ENCODE measurements at regions of chr1 and their contacts with region 1.

Region 1: GRCh38 chr1:43650310-43651085 is 549 bp downstream of the KDM4A start:
- DNase-seq: peak; percentile 98
- H3K4me3 Mint-ChIP-seq: peak overlapping the region; percentile 97
- H3K27ac Mint-ChIP-seq: peak overlapping the region; percentile 85
- H3K4me1 Mint-ChIP-seq: peaks cover 18% of the 10 kb centered on the region
- H3K27me3 Mint-ChIP-seq: no peaks in the 10 kb centered on the region
- CTCF ChIP-seq: no peak

Region 2: GRCh38 chr1:43227143-43227764 is 423.2 kb before region 1 on chr1:
- CTCF ChIA-PET with region 1: interaction called, 3 read pairs
- POLR2A ChIA-PET with region 1: interaction called, 7 read pairs
- intact Hi-C with region 1: loop called (anchors 5 kb)
- DNase-seq: peak; percentile 80
- H3K4me3 Mint-ChIP-seq: no peak overlapping the region
- H3K27ac Mint-ChIP-seq: no peak overlapping the region
- H3K4me1 Mint-ChIP-seq: peaks cover 11% of the 10 kb centered on the region
- H3K27me3 Mint-ChIP-seq: no peaks in the 10 kb centered on the region
- CTCF ChIP-seq: peak; percentile 71

Region 3: DNA sequence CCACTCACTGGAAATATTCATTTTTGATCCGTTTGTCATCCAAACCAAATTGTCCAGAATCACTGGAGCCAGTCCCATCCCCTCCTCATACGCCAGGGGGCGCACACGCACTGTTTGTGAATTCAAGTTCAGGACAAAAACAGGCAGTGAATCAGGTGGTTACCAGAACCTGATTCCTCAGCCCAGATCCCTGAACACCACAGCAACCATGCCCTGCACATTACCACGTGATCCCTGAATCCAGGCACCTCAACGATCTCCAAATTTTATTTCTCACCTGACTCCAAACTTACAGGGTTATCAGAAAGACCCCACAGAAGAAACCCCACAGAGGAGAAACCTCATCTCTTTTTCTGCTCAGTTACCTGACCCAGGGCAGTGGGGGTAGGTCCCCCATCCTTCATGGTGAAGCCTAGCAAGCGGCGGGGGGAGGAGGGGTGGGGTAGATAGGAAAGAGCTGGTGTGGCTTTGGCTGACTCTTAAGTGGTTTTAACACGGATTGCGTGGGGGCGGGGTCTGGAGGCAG is 121.2 kb before region 1 on chr1:
- CTCF ChIA-PET with region 1: interaction called, 7 read pairs
- POLR2A ChIA-PET with region 1: interaction called, 50 read pairs
- intact Hi-C with region 1: loop called (anchors 1 kb)
- DNase-seq: peak; percentile 93
- H3K4me3 Mint-ChIP-seq: no peak overlapping the region
- H3K27ac Mint-ChIP-seq: no peak overlapping the region
- H3K4me1 Mint-ChIP-seq: peaks cover 48% of the 10 kb centered on the region
- H3K27me3 Mint-ChIP-seq: no peaks in the 10 kb centered on the region
- CTCF ChIP-seq: peak; percentile 84

Region 4: GRCh38 chr1:43549921-43550597 is 100.4 kb before region 1 on chr1:
- CTCF ChIA-PET with region 1: interaction called, 4 read pairs
- POLR2A ChIA-PET with region 1: interaction called, 30 read pairs
- intact Hi-C with region 1: no loop called
- DNase-seq: peak; percentile 84
- H3K4me3 Mint-ChIP-seq: peak overlapping the region; percentile 63
- H3K27ac Mint-ChIP-seq: no peak overlapping the region
- H3K4me1 Mint-ChIP-seq: peaks cover 14% of the 10 kb centered on the region
- H3K27me3 Mint-ChIP-seq: no peaks in the 10 kb centered on the region
- CTCF ChIP-seq: no peak

Region 5: GRCh38 chr1:43587594-43587993 is 62.9 kb before region 1 on chr1:
- CTCF ChIA-PET with region 1: interaction called, 4 read pairs
- POLR2A ChIA-PET with region 1: interaction called, 27 read pairs
- intact Hi-C with region 1: loop called (anchors 5 kb)
- DNase-seq: peak; percentile 59
- H3K4me3 Mint-ChIP-seq: no peak overlapping the region
- H3K27ac Mint-ChIP-seq: peak overlapping the region; percentile 59
- H3K4me1 Mint-ChIP-seq: peaks cover 19% of the 10 kb centered on the region
- H3K27me3 Mint-ChIP-seq: no peaks in the 10 kb centered on the region
- CTCF ChIP-seq: no peak

Region 6: DNA sequence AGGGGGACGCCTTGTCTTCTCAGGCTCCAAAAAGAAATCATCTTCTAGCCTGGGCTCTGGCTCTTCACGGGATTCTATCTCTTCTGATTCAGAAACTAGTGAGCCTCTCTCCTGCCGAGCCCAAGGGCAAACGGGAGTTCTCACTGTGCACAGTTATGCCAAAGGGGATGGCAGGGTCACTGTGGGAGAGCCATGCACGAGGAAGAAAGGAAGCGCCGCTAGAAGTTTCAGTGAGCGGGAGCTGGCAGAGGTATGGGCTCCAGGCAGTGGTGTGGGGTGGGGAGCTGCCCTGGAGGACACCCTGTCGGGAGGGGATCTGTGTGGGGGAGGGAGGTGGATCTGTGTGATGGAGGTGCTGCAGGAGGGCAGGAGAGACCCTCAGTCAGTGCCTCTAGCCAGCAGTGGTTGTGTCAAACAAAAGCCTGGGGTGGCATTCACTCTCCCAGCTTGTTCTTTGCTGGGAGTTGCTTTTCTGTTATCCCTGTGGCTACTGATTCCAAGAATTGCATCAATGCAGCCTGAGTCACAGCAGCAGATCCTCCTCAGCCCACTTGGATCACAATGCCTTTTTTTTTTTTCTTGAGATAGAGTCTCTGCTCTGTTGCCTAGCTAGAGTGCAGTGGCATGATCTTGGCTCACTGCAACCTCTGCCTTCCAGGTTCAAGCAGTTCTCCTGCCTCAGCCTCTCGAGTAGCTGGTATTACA is 21.3 kb after region 1 on chr1:
- CTCF ChIA-PET with region 1: interaction called, 8 read pairs
- POLR2A ChIA-PET with region 1: interaction called, 41 read pairs
- intact Hi-C with region 1: no loop called
- DNase-seq: peak; percentile 48
- H3K4me3 Mint-ChIP-seq: no peak overlapping the region
- H3K27ac Mint-ChIP-seq: peak overlapping the region; percentile 78
- H3K4me1 Mint-ChIP-seq: peaks cover 13% of the 10 kb centered on the region
- H3K27me3 Mint-ChIP-seq: no peaks in the 10 kb centered on the region
- CTCF ChIP-seq: no peak

Region 7: GRCh38 chr1:43952731-43953346 is 302.3 kb after region 1 on chr1:
- CTCF ChIA-PET with region 1: no interaction called
- POLR2A ChIA-PET with region 1: no interaction called
- intact Hi-C with region 1: no loop called
- DNase-seq: no peak
- H3K4me3 Mint-ChIP-seq: no peak overlapping the region
- H3K27ac Mint-ChIP-seq: no peak overlapping the region
- H3K4me1 Mint-ChIP-seq: peaks cover 17% of the 10 kb centered on the region
- H3K27me3 Mint-ChIP-seq: no peaks in the 10 kb centered on the region
- CTCF ChIP-seq: no peak

Region 8: DNA sequence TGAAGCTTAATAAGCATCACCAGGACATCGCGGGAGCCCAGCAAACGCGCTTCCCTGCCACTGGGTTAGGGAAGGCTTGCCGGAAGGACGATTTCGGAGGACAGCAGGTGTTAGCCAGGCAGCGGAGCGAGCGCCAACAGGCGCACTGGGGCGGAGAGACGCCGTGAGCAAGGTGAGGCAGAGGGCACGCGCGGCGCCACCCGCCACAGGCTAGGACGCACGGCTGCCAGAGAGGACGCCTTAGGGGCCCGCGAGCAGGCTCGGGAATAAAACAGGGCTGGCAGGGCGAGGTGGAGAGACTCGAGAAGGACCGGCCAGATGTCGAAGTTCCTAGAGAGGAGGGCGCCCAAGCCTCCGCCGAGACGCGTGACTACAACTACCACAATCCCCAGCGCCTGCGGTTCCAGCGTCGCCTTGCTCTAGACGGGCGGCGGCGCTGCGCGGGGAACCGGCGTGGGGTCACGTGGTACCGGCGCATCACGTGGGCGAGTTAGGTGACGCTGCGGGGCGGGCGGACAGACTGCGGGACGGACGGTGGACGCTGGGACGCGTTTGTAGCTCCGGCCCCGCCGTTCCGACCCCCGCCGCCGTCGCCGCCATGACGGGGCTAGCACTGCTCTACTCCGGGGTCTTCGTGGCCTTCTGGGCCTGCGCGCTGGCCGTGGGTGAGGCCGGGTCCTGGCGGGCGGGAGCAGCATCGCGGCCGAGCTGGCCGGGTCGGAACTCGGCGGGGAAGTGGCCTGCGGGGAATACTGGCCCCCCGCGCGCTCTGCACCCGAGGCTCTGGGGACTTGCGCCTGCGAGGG is 324.1 kb after region 1 on chr1 and contains the start of gene ATP6V0B:
- CTCF ChIA-PET with region 1: no interaction called
- POLR2A ChIA-PET with region 1: interaction called, 11 read pairs
- intact Hi-C with region 1: no loop called
- DNase-seq: peak; percentile 95
- H3K4me3 Mint-ChIP-seq: peak within 1 kb of the TSS; percentile 94
- H3K27ac Mint-ChIP-seq: peak within 1 kb of the TSS; percentile 94
- H3K4me1 Mint-ChIP-seq: peaks cover 35% of the 10 kb centered on the region
- H3K27me3 Mint-ChIP-seq: no peaks in the 10 kb centered on the region
- CTCF ChIP-seq: no peak
- total RNA-seq, gene ATP6V0B: 120 and 141 TPM in 2 replicates

Measured in MCF 10A (cell line).